ENCODE measurements at regions of chr11 and their contacts with region 1.

Region 1: DNA sequence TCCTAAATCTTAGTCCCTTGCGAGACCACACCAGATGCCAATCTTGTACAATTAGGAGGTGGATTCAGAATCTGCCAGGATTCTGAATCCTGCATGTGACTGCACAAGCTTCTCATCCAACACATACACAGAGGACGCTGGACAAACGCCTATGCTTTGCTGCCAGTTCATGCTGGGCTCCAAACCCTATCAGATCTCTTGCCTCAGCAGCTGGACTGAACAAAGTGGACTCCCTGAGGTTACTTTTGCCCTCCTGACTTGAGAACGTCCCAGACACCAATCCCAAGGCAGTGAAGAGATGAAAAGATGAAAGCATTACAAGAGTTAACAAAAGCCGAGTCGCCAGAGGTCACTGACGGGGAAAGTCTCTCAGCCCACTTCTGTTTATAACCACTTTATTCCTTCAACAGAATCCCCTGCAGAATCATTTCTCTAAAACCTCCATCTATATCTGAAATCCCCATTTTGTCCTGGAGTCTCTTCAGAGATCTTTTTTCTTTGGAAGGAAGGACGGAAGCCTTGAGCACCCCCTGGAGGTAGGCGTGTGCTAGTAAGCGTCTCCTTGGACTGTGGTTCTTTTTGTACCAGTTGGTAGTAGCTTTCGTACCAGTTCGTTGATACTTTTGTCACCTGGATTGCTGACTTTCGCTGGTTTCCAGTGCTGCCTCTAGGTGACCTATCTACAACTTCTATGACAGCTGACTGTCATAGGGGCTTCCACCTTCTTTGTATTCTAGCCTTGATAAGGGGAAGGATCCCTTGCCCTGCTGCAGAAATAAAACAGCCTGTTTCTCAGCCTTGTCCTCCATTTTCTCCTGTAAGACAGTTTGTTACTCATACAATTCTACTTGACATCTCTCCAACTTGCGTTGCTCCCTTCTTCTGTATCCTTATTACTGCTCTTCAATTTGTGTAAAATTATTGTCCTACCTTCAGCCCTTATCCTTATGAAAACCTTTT is 26.1 kb upstream of the EED start:
- DNase-seq: peak; percentile 80
- ATAC-seq: peak; percentile 71
- H3K4me3 ChIP-seq: peak overlapping the region; percentile 56
- H3K27ac ChIP-seq: no peak overlapping the region
- H3K4me1 ChIP-seq: no peaks in the 10 kb centered on the region
- H3K27me3 ChIP-seq: no peaks in the 10 kb centered on the region
- CTCF ChIP-seq: peak; percentile 79

Region 2: DNA sequence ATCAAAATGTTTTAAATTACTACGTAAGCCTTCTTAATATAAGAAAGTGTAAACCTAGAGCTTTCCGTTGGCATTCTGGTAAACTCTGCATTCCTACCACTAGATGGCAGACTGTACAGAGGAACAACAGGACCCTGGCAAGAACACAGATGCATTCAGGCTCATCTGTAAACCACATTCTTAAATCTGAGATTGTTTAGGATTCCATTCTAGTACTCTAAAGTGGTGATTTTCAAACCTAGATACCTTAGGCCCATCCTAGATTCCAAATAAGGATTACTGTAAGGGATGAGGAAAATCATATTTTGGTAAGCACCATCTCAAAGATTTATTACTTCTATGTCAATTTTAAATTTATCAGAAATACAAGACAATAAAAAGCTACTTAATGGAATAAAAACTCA is 176.4 kb before region 1 on chr11:
- CTCF ChIA-PET with region 1: interaction called, 3 read pairs
- POLR2A ChIA-PET with region 1: no interaction called
- intact Hi-C with region 1: loop called (anchors 5 kb)
- DNase-seq: peak; percentile 92
- ATAC-seq: peak; percentile 64
- H3K4me3 ChIP-seq: no peak overlapping the region
- H3K27ac ChIP-seq: no peak overlapping the region
- H3K4me1 ChIP-seq: peaks cover 3% of the 10 kb centered on the region; the same call in 1 of the 2 replicates
- H3K27me3 ChIP-seq: no peaks in the 10 kb centered on the region
- CTCF ChIP-seq: peak; percentile 82

Region 3: GRCh38 chr11:86459682-86460460 is 241.5 kb after region 1 on chr11:
- CTCF ChIA-PET with region 1: no interaction called
- POLR2A ChIA-PET with region 1: no interaction called
- intact Hi-C with region 1: no loop called
- DNase-seq: peak; percentile 95
- ATAC-seq: peak; percentile 55
- H3K4me3 ChIP-seq: no peak overlapping the region
- H3K27ac ChIP-seq: peak overlapping the region; percentile 81
- H3K4me1 ChIP-seq: peaks cover 42% of the 10 kb centered on the region
- H3K27me3 ChIP-seq: no peaks in the 10 kb centered on the region
- CTCF ChIP-seq: no peak